ENCODE measurements at regions of chr19 and their contacts with region 1.

Region 1: GRCh38 chr19:11293433-11294389 is 2.2 kb upstream of the TSPAN16 start:
- DNase-seq: peak; percentile 89 to 93
- ATAC-seq: peak; percentile 84

Region 2: GRCh38 chr19:11355160-11356073 is 61.7 kb after region 1 on chr19 and contains the start of gene PLPPR2:
- intact Hi-C with region 1: no loop called
- DNase-seq: peak; percentile 90 to 95
- ATAC-seq: peak; percentile 96
- total RNA-seq, gene PLPPR2: 5.4 to 7.3 TPM

Region 3: DNA sequence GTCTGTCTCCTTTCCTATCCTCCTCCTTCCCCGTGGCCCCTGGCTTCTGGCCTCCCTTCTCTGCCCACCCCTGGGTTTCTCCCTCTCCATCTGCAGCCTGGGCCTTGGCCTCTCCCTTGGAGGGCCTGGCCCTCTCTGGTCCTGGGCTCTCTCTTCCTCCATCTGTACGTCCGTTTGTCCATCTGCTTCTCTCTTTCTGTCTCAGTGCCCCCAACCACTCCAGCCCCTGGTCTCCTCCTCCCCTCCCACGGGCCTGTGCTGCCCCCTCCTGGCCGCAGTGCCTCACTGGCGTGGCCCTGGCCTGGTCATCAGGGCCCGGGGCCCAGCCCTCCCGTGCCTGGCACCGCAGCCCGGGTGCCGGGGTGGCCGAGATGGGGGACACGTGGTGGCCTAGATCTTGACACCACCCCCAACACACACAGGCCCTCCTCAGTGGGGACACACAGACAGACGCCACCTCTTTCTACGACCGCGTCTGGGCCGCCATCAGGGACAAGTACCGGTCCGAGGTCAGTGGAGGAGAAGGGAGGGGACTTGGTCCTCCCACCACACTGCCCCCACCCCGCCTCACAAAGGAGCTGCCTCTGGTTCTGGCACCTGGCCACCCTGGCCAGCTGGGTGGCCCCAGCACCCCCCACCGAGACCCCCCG is 153.1 kb after region 1 on chr19:
- intact Hi-C with region 1: loop called (anchors 10 kb)
- DNase-seq: peak in 1 of 2 donors; percentile 54
- ATAC-seq: peak; percentile 73

Region 4: DNA sequence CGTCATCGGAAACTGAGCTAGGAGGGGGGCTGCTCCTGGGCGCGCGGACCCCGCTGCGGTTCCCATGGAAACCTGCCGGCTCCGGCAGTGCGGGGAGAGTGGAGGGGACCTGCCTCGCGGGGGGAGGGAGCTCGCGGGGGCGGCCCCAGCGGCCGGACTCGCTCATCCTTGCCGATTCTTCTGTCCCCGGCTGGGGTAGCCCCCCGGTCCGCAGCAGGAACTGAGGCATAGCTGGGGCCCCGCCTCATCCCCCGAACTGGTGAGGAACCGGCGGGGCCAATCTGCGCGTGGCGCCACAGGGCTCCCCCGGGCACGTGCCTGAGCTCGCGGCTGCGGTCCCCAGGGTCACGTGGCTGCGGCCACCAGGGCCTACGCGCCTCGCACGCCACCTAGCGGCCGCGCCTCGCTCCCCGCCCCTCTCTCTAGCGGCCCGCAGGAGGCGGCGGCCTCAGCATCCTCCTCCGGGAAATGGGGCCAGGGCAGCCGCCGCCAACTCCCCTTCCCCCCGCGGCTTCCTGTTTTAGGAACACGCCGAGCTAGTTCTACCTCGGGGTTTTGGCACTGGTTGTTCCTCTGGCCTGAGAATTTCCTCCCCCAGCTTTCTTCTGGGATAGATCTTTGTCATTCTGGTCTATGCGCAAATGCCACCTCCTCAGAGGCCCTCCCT is 188.8 kb after region 1 on chr19:
- intact Hi-C with region 1: loop called in 1 of 2 experiments (anchors 10 kb)
- DNase-seq: peak; percentile 71 to 87
- ATAC-seq: peak; percentile 85

Measured in left colon (tissue), 2 donors.